ENCODE measurements at regions of chr6 and their contacts with region 1.

Region 1: DNA sequence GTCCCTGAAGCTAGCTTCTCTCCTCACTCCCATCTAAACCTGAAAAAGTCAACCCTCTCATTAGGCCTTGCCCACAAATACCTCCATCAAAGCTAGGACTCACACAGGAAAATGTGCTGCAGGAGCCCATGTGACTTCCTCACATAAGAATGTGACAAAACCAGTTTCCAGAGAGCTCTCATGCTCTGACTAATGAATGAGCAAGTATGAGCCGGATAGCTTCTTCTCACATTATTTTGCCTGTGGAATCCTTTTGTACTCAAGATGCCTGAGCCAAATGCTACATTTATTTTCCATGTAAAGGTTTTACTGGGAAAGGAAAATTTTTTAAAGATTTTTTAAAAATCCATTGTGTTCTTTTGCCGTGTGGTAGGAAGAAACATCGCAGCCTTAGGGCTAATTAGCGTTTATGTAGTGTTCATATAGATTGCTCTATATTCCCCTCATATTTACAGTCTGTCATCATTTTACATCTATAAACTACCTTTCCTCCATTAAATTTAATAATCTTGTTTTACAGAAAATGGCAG is 68.6 kb upstream of the CCN6 start:
- DNase-seq: peak in 5 of 9 donors; percentile 34 to 50 (median 43)
- ATAC-seq: peak; percentile 54
- H3K4me3 ChIP-seq: no peak overlapping the region
- H3K4me3 Mint-ChIP-seq: peak overlapping the region in 9 of 10 donors; percentile 1 to 75 (median 56)
- H3K27ac ChIP-seq: peak overlapping the region; percentile 47
- H3K27ac Mint-ChIP-seq: peak overlapping the region; percentile 2 to 96 (median 77)
- H3K4me1 ChIP-seq: peaks cover 27 to 87% of the 10 kb centered on the region in 2 donors
- H3K4me1 Mint-ChIP-seq: peaks cover 59 to 99% (median 90%) of the 10 kb centered on the region in 7 donors
- H3K27me3 ChIP-seq: no peaks in the 10 kb centered on the region
- H3K27me3 Mint-ChIP-seq: no peaks in the 10 kb centered on the region

Region 2: DNA sequence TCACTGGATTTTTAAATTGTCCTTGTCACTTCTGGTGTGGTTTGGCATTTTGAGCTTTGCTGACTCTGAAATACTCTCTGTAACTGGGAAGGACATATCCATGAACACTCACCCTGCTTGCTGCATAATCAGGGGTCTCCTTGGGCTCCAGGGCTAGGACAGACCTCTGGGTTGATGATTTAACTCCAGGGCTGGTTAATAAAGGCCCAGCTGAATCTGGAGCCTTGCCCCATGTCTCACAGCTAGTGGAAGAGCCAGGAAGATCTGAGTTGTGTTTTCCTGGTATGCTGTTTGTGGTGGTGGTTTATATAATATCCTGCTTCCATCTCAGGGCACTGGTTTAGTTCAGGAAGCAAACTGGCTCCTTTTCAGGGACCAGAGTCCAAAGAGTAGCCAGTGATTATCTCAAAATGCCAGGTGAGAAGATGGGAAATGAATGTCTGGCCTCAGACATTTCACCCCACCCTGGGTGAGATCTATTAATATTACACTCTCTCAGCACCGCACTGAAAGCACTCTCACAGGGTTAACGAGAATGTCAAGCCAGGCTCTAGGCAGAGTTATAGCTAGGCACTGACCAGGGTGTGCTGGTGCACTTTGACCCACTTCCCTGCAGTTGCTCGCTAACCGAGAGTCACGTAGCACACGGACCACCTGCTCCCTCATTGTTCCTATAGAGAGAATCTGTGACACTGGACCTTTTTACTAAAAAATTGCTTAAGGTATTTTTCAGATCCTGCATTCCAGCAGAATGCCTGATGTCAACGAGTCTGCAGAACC is 1418.7 kb before region 1 on chr6:
- CTCF ChIA-PET with region 1: no interaction called
- POLR2A ChIA-PET with region 1: no interaction called
- intact Hi-C with region 1: no loop called
- DNase-seq: no peak
- ATAC-seq: no peak
- H3K4me3 ChIP-seq: no peak overlapping the region
- H3K4me3 Mint-ChIP-seq: no peak overlapping the region
- H3K27ac ChIP-seq: no peak overlapping the region
- H3K27ac Mint-ChIP-seq: peak overlapping the region in 1 of 9 donors; percentile 5
- H3K4me1 ChIP-seq: peaks cover 3% of the 10 kb centered on the region in 2 donors
- H3K4me1 Mint-ChIP-seq: peaks cover 4 to 15% (median 9%) of the 10 kb centered on the region in 7 donors
- H3K27me3 ChIP-seq: no peaks in the 10 kb centered on the region
- H3K27me3 Mint-ChIP-seq: peaks cover 0 to 2% (median 0%) of the 10 kb centered on the region in 5 donors

Region 3: GRCh38 chr6:111973118-111973761 is 12.0 kb before region 1 on chr6:
- CTCF ChIA-PET with region 1: interaction called, 12 read pairs
- POLR2A ChIA-PET with region 1: interaction called, 147 read pairs
- intact Hi-C with region 1: loop called in 1 of 2 experiments (anchors 1 kb)
- DNase-seq: peak; percentile 41 to 92 (median 88)
- ATAC-seq: peak; percentile 90
- H3K4me3 ChIP-seq: peak overlapping the region; percentile 17
- H3K4me3 Mint-ChIP-seq: peak overlapping the region; percentile 55 to 82 (median 67)
- H3K27ac ChIP-seq: peak overlapping the region; percentile 95
- H3K27ac Mint-ChIP-seq: peak overlapping the region; percentile 84 to 99 (median 96)
- H3K4me1 ChIP-seq: peaks cover 7 to 77% of the 10 kb centered on the region in 2 donors
- H3K4me1 Mint-ChIP-seq: peaks cover 37 to 95% (median 82%) of the 10 kb centered on the region in 7 donors
- H3K27me3 ChIP-seq: no peaks in the 10 kb centered on the region
- H3K27me3 Mint-ChIP-seq: peaks cover 0 to 10% (median 0%) of the 10 kb centered on the region in 5 donors